Body of pancreas (tissue), 4 donors: ENCODE measurements at regions of chr3 and their contacts with region 1.

Region 1: GRCh38 chr3:180580934-180581333 is 21.0 kb upstream of the TTC14 start:
- DNase-seq: no peak
- ATAC-seq: no peak
- H3K4me3 ChIP-seq: no peak overlapping the region
- H3K27ac ChIP-seq: no peak overlapping the region
- H3K4me1 ChIP-seq: no peaks in the 10 kb centered on the region
- H3K27me3 ChIP-seq: no peaks in the 10 kb centered on the region
- CTCF ChIP-seq: no peak
- POLR2A ChIP-seq: no peak

Region 2: GRCh38 chr3:179811321-179812095 is 769.4 kb before region 1 on chr3:
- intact Hi-C with region 1: loop called (anchors 10 kb)
- DNase-seq: peak; percentile 51 to 76 (median 68)
- ATAC-seq: peak; percentile 79
- H3K4me3 ChIP-seq: no peak overlapping the region
- H3K27ac ChIP-seq: peak overlapping the region in 1 of 4 donors; percentile 42
- H3K4me1 ChIP-seq: peaks cover 7% of the 10 kb centered on the region
- H3K27me3 ChIP-seq: no peaks in the 10 kb centered on the region
- CTCF ChIP-seq: peak; percentile 32 to 81 (median 74)
- POLR2A ChIP-seq: no peak

Region 3: GRCh38 chr3:179929091-179929529 is 651.8 kb before region 1 on chr3:
- intact Hi-C with region 1: loop called (anchors 10 kb)
- DNase-seq: peak; percentile 53 to 69 (median 68)
- ATAC-seq: peak; percentile 53
- H3K4me3 ChIP-seq: no peak overlapping the region
- H3K27ac ChIP-seq: no peak overlapping the region
- H3K4me1 ChIP-seq: no peaks in the 10 kb centered on the region
- H3K27me3 ChIP-seq: no peaks in the 10 kb centered on the region
- CTCF ChIP-seq: peak; percentile 42 to 88 (median 67)
- POLR2A ChIP-seq: no peak

Region 4: DNA sequence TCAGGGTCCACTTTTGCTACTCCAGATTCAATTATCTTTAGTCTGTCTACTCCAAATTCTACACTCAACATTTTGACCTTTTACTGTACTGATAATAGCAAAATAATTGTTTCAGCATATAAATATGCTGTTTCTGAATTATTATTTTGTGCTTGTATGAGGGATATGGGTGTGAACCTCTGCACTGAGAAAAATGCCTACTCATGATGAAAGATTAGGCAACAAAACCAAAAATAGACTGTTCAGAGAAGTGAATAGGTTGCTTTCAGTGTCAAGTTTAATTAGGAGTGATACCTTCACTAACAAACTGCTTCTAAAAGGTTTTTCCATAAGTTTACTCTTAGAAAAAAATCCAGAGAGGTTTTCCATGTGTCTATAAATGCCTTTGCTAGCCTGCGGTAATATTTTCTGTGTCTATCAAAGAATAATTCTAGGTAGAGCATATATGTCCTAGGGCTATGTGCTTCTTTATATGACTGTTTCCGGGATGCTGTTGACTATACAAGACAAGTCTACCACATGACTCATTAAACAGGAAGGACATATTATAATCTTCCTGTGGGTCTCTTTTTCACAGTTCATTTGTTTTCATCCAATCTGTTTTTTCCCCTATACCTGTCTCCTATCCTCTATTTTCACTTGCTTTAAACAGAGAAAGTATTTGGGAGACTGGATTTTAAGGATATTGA is 197.5 kb before region 1 on chr3:
- intact Hi-C with region 1: no loop called
- DNase-seq: no peak
- ATAC-seq: no peak
- H3K4me3 ChIP-seq: no peak overlapping the region
- H3K27ac ChIP-seq: no peak overlapping the region
- H3K4me1 ChIP-seq: peaks cover 17% of the 10 kb centered on the region
- H3K27me3 ChIP-seq: no peaks in the 10 kb centered on the region
- CTCF ChIP-seq: no peak
- POLR2A ChIP-seq: no peak